CD8-positive, alpha-beta T cell (primary cell): ENCODE measurements at regions of chr17 and their contacts with region 1.

Region 1: DNA sequence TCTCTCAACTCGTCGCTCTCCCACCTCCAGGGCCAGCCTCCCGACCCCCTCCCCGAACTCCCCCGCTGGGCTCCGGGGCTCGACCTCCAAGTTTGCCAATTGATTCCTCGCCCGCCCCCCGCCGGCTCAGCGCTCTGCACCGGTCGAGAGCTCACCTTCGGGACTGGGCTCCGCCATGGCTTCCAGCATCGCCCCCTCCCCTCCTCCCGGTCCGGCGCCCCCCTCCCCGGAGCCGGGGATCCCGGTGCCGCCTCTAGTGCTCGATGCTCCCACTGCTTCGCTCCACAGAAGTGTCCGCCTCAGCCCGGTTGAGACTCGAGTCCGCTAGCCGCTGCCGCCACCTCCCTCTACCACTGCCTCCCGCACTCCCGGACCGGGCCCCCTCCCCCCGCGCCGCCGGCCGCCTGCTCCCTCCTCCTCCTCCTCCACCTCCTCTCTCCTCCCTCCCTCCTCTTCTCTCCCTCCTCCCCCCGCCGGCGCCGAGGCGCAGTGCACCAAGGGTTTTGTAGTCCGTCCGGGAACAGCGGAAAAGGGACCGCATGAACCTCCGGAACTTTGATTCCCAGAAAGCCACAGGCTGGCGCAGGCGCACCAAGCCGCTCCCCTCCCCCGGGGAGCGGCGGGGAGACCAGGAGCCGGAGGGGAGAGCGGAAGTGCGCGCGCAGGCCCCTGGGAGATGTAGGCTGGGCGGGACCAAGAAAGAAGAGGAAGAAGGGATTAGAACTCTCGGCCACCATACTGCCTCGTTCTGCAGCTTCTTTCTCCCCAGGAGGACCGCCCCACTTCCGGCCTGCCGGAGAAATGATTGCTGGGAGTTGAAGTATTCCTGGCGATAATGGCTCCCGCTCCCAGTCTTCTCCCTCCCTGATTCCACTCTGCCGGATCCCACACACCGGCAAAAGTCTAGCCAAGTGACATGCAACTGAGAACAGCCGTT is at the start of gene PHF23:
- DNase-seq: peak; percentile 93 to 99 (median 97)
- ATAC-seq: peak; percentile 64
- H3K4me3 ChIP-seq: peak within 1 kb of the TSS; percentile 87 to 90
- H3K4me3 Mint-ChIP-seq: peak within 1 kb of the TSS; percentile 98
- H3K27ac ChIP-seq: peak within 1 kb of the TSS; percentile 64 to 100
- H3K27ac Mint-ChIP-seq: peak within 1 kb of the TSS; percentile 90
- H3K4me1 ChIP-seq: peaks cover 37% of the 10 kb centered on the region
- H3K4me1 Mint-ChIP-seq: peaks cover 58% of the 10 kb centered on the region
- H3K27me3 ChIP-seq: no peaks in the 10 kb centered on the region
- H3K27me3 Mint-ChIP-seq: no peaks in the 10 kb centered on the region
- CTCF ChIP-seq: no peak
- total RNA-seq, gene PHF23: 2.8 to 3.1 TPM

Region 2: GRCh38 chr17:6970866-6971391 is 268.4 kb before region 1 on chr17:
- CTCF ChIA-PET with region 1: no interaction called
- POLR2A ChIA-PET with region 1: no interaction called
- intact Hi-C with region 1: no loop called
- DNase-seq: no peak
- ATAC-seq: no peak
- H3K4me3 ChIP-seq: no peak overlapping the region
- H3K4me3 Mint-ChIP-seq: no peak overlapping the region
- H3K27ac ChIP-seq: no peak overlapping the region
- H3K27ac Mint-ChIP-seq: no peak overlapping the region
- H3K4me1 ChIP-seq: no peaks in the 10 kb centered on the region
- H3K4me1 Mint-ChIP-seq: no peaks in the 10 kb centered on the region
- H3K27me3 ChIP-seq: no peaks in the 10 kb centered on the region
- H3K27me3 Mint-ChIP-seq: no peaks in the 10 kb centered on the region
- CTCF ChIP-seq: no peak

Region 3: GRCh38 chr17:7014261-7014994 is 224.9 kb before region 1 on chr17:
- CTCF ChIA-PET with region 1: no interaction called
- POLR2A ChIA-PET with region 1: no interaction called
- intact Hi-C with region 1: loop called (anchors 1 kb)
- DNase-seq: peak; percentile 94 to 100 (median 97)
- ATAC-seq: peak; percentile 79
- H3K4me3 ChIP-seq: peak overlapping the region; percentile 69 to 70
- H3K4me3 Mint-ChIP-seq: peak overlapping the region; percentile 98
- H3K27ac ChIP-seq: peak overlapping the region; percentile 95 to 99
- H3K27ac Mint-ChIP-seq: peak overlapping the region; percentile 100
- H3K4me1 ChIP-seq: peaks cover 63% of the 10 kb centered on the region
- H3K4me1 Mint-ChIP-seq: peaks cover 78% of the 10 kb centered on the region
- H3K27me3 ChIP-seq: no peaks in the 10 kb centered on the region
- H3K27me3 Mint-ChIP-seq: no peaks in the 10 kb centered on the region
- CTCF ChIP-seq: peak; percentile 61

Region 4: GRCh38 chr17:7214300-7215135 is 24.8 kb before region 1 on chr17:
- CTCF ChIA-PET with region 1: interaction called, 4 read pairs
- POLR2A ChIA-PET with region 1: interaction called, 26 read pairs
- intact Hi-C with region 1: loop called (anchors 1 kb)
- DNase-seq: peak; percentile 97 to 100 (median 98)
- ATAC-seq: peak; percentile 75
- H3K4me3 ChIP-seq: peak overlapping the region; percentile 36 to 56
- H3K4me3 Mint-ChIP-seq: peak overlapping the region; percentile 90
- H3K27ac ChIP-seq: peak overlapping the region; percentile 80 to 95
- H3K27ac Mint-ChIP-seq: peak overlapping the region; percentile 95
- H3K4me1 ChIP-seq: peaks cover 51% of the 10 kb centered on the region
- H3K4me1 Mint-ChIP-seq: peaks cover 61% of the 10 kb centered on the region
- H3K27me3 ChIP-seq: no peaks in the 10 kb centered on the region
- H3K27me3 Mint-ChIP-seq: no peaks in the 10 kb centered on the region
- CTCF ChIP-seq: peak; percentile 52

Region 5: DNA sequence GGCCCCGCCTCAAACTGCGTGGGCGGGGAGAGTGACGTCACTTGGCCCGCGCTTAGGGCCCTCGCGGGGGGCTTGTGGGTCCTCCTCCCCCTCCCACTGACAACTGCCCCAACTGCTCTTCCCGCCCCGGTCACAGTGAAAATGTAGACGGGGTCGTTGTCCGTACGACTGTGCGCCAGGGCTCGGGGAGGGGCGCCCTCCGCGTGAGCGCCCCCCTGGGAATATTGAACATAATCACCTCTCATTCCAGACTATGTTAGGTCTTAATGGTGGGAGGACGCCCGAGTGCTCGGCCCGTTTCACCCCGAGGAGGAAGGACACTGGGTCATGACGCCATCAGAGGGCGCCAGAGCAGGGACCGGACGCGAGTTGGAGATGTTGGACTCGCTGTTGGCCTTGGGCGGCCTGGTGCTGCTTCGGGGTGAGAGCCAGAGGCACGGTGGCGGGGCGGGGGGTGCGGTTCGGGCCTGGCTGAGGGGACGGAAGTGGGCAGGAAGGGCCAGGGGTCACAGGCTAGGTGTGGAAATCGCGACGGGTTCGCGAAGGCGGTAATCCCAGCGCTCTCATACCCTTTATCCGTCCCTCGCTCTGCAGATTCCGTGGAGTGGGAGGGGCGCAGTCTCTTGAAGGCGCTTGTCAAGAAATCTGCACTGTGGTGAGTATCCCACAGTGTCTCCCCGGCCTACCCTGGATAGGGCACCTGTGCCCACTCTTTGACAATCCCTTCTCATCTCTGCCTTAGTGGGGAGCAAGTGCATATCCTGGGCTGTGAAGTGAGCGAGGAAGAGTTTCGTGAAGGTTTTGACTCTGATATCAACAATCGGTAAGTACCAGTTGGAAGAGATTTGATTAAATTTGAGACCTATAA is 13.1 kb after region 1 on chr17 and contains the start of gene ELP5:
- CTCF ChIA-PET with region 1: interaction called, 5 read pairs
- POLR2A ChIA-PET with region 1: interaction called, 16 read pairs
- intact Hi-C with region 1: loop called (anchors 1 kb)
- DNase-seq: peak; percentile 73 to 99 (median 87)
- ATAC-seq: peak; percentile 48
- H3K4me3 ChIP-seq: peak within 1 kb of the TSS; percentile 81 to 92
- H3K4me3 Mint-ChIP-seq: peak within 1 kb of the TSS; percentile 97
- H3K27ac ChIP-seq: peak within 1 kb of the TSS; percentile 99
- H3K27ac Mint-ChIP-seq: peak within 1 kb of the TSS; percentile 100
- H3K4me1 ChIP-seq: peaks cover 31% of the 10 kb centered on the region
- H3K4me1 Mint-ChIP-seq: peaks cover 44% of the 10 kb centered on the region
- H3K27me3 ChIP-seq: no peaks in the 10 kb centered on the region
- H3K27me3 Mint-ChIP-seq: no peaks in the 10 kb centered on the region
- CTCF ChIP-seq: no peak
- total RNA-seq, gene ELP5: 38.9 to 39.0 TPM

Region 6: GRCh38 chr17:7413346-7413985 is 174.1 kb after region 1 on chr17:
- CTCF ChIA-PET with region 1: no interaction called
- POLR2A ChIA-PET with region 1: no interaction called
- intact Hi-C with region 1: no loop called
- DNase-seq: no peak
- ATAC-seq: no peak
- H3K4me3 ChIP-seq: no peak overlapping the region
- H3K4me3 Mint-ChIP-seq: no peak overlapping the region
- H3K27ac ChIP-seq: no peak overlapping the region
- H3K27ac Mint-ChIP-seq: no peak overlapping the region
- H3K4me1 ChIP-seq: no peaks in the 10 kb centered on the region
- H3K4me1 Mint-ChIP-seq: peaks cover 8% of the 10 kb centered on the region
- H3K27me3 ChIP-seq: no peaks in the 10 kb centered on the region
- H3K27me3 Mint-ChIP-seq: no peaks in the 10 kb centered on the region
- CTCF ChIP-seq: no peak

Region 7: GRCh38 chr17:7614422-7615264 is 375.3 kb after region 1 on chr17 and contains the start of gene FXR2:
- CTCF ChIA-PET with region 1: no interaction called
- POLR2A ChIA-PET with region 1: interaction called, 3 read pairs
- intact Hi-C with region 1: loop called in 1 of 2 experiments (anchors 1 kb)
- DNase-seq: peak; percentile 96 to 100 (median 98)
- ATAC-seq: peak; percentile 87
- H3K4me3 ChIP-seq: peak within 1 kb of the TSS; percentile 78 to 86
- H3K4me3 Mint-ChIP-seq: peak within 1 kb of the TSS; percentile 89
- H3K27ac ChIP-seq: peak within 1 kb of the TSS; percentile 70 to 89
- H3K27ac Mint-ChIP-seq: peak within 1 kb of the TSS; percentile 96
- H3K4me1 ChIP-seq: peaks cover 30% of the 10 kb centered on the region
- H3K4me1 Mint-ChIP-seq: peaks cover 38% of the 10 kb centered on the region
- H3K27me3 ChIP-seq: no peaks in the 10 kb centered on the region
- H3K27me3 Mint-ChIP-seq: no peaks in the 10 kb centered on the region
- CTCF ChIP-seq: peak; percentile 39
- total RNA-seq, gene FXR2: 18.8 to 21.7 TPM

Region 8: GRCh38 chr17:7931709-7932482 is 692.5 kb after region 1 on chr17 and contains the starts of genes CNTROB and TRAPPC1:
- CTCF ChIA-PET with region 1: no interaction called
- POLR2A ChIA-PET with region 1: no interaction called
- intact Hi-C with region 1: loop called in 1 of 2 experiments (anchors 5 kb)
- DNase-seq: peak; percentile 99 to 100 (median 99)
- ATAC-seq: peak; percentile 93
- H3K4me3 ChIP-seq: peak within 1 kb of the TSS; percentile 96
- H3K4me3 Mint-ChIP-seq: peak within 1 kb of the TSS; percentile 100
- H3K27ac ChIP-seq: peak within 1 kb of the TSS; percentile 85
- H3K27ac Mint-ChIP-seq: peak within 1 kb of the TSS; percentile 99
- H3K4me1 ChIP-seq: peaks cover 22% of the 10 kb centered on the region
- H3K4me1 Mint-ChIP-seq: peaks cover 50% of the 10 kb centered on the region
- H3K27me3 ChIP-seq: no peaks in the 10 kb centered on the region
- H3K27me3 Mint-ChIP-seq: no peaks in the 10 kb centered on the region
- CTCF ChIP-seq: no peak
- total RNA-seq, gene CNTROB: 20.1 to 23.6 TPM
- total RNA-seq, gene TRAPPC1: 29.6 to 39.4 TPM